HepG2 (cell line): ENCODE measurements at regions of chr2 and their contacts with region 1.

Region 1: GRCh38 chr2:43424262-43425207 is 171.3 kb downstream of the THADA start:
- DNase-seq: peak; percentile 94
- ATAC-seq: peak; percentile 83
- H3K4me3 ChIP-seq: no peak overlapping the region; a peak in 1 of 6 replicates
- H3K27ac ChIP-seq: peak overlapping the region; percentile 83
- H3K4me1 ChIP-seq: peaks cover 78% of the 10 kb centered on the region
- H3K27me3 ChIP-seq: no peaks in the 10 kb centered on the region
- CTCF ChIP-seq: no peak
- EP300 ChIP-seq: peak in 1 of 2 experiments; percentile 97; a peak in 2 of 4 replicates
- POLR2A ChIP-seq: no peak
- RAD21 ChIP-seq: peak; percentile 8; the same call in 1 of the 2 replicates

Region 2: DNA sequence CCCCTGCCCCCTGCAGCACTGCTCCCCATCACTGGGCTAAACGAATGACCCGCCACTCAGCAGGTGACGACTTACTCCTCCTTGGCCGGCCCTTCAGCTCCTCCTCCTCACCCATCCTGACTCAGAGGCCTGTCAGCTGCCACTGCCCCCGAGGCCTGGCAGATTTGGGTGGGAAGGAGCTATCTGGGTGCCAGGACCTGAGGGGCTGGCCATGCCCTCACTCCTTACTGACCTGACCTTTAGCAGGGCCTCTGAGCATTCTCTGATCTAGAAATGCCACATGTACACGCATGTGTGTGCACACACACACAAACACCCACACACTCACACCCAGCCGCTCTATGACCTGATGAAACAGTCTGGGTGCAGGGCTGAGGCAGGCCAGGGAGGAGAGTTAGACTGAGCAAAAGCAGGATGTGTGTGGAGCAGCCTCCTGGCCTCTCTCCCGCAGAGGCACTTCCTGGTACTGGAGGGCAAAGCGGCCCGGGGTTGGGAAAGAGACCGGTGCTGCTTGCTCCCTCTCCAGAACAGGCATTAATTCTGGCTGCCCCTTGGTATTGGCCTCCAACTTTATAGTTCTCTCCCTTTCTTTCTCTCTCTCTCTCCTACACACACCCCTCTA is 266.2 kb before region 1 on chr2:
- CTCF ChIA-PET with region 1: no interaction called
- POLR2A ChIA-PET with region 1: no interaction called
- in situ Hi-C with region 1: no loop called
- intact Hi-C with region 1: no loop called
- DNase-seq: peak; percentile 74
- ATAC-seq: peak; percentile 47
- H3K4me3 ChIP-seq: peak overlapping the region; percentile 39 to 70 (median 53)
- H3K27ac ChIP-seq: peak overlapping the region; percentile 57
- H3K4me1 ChIP-seq: peaks cover 90% of the 10 kb centered on the region
- H3K27me3 ChIP-seq: no peaks in the 10 kb centered on the region
- CTCF ChIP-seq: no peak
- EP300 ChIP-seq: no peak; a peak in 1 of 4 replicates
- POLR2A ChIP-seq: peak in 1 of 2 experiments; percentile 63; a peak in 3 of 4 replicates
- RAD21 ChIP-seq: 0 out of 2 replicates have a peak, but pooled peaks have one; percentile 7

Region 3: GRCh38 chr2:43312755-43313641 is 111.5 kb before region 1 on chr2:
- CTCF ChIA-PET with region 1: no interaction called
- POLR2A ChIA-PET with region 1: no interaction called
- in situ Hi-C with region 1: no loop called
- intact Hi-C with region 1: loop called (anchors 1 kb)
- DNase-seq: no peak
- ATAC-seq: peak; percentile 27
- H3K4me3 ChIP-seq: no peak overlapping the region
- H3K27ac ChIP-seq: peak overlapping the region; percentile 2
- H3K4me1 ChIP-seq: peaks cover 64% of the 10 kb centered on the region
- H3K27me3 ChIP-seq: no peaks in the 10 kb centered on the region
- CTCF ChIP-seq: no peak
- EP300 ChIP-seq: no peak
- POLR2A ChIP-seq: no peak
- RAD21 ChIP-seq: no peak

Region 4: GRCh38 chr2:43389581-43390466 is 34.7 kb before region 1 on chr2:
- CTCF ChIA-PET with region 1: no interaction called
- POLR2A ChIA-PET with region 1: interaction called, 9 read pairs
- in situ Hi-C with region 1: no loop called
- intact Hi-C with region 1: loop called (anchors 1 kb)
- DNase-seq: peak; percentile 83
- ATAC-seq: peak; percentile 92
- H3K4me3 ChIP-seq: peak overlapping the region in 2 of 3 experiments; percentile 2 to 35; a peak in 1 of 6 replicates
- H3K27ac ChIP-seq: peak overlapping the region; percentile 68
- H3K4me1 ChIP-seq: peaks cover 52% of the 10 kb centered on the region
- H3K27me3 ChIP-seq: no peaks in the 10 kb centered on the region
- CTCF ChIP-seq: no peak
- EP300 ChIP-seq: peak in 1 of 2 experiments; percentile 95; a peak in 2 of 4 replicates
- POLR2A ChIP-seq: no peak
- RAD21 ChIP-seq: no peak

Region 5: GRCh38 chr2:43455731-43456642 is 31.5 kb after region 1 on chr2:
- CTCF ChIA-PET with region 1: no interaction called
- POLR2A ChIA-PET with region 1: interaction called, 6 read pairs
- in situ Hi-C with region 1: no loop called
- intact Hi-C with region 1: loop called (anchors 5 kb)
- DNase-seq: peak; percentile 91
- ATAC-seq: peak; percentile 95
- H3K4me3 ChIP-seq: no peak overlapping the region
- H3K27ac ChIP-seq: peak overlapping the region; percentile 62
- H3K4me1 ChIP-seq: peaks cover 99% of the 10 kb centered on the region
- H3K27me3 ChIP-seq: no peaks in the 10 kb centered on the region
- CTCF ChIP-seq: peak; percentile 71
- EP300 ChIP-seq: peak in 1 of 2 experiments; percentile 77; a peak in 2 of 4 replicates
- POLR2A ChIP-seq: no peak
- RAD21 ChIP-seq: peak; percentile 27; the same call in 1 of the 2 replicates

Region 6: GRCh38 chr2:44201648-44202165 is 777.2 kb after region 1 on chr2:
- CTCF ChIA-PET with region 1: no interaction called
- POLR2A ChIA-PET with region 1: no interaction called
- in situ Hi-C with region 1: no loop called
- intact Hi-C with region 1: no loop called
- DNase-seq: no peak
- ATAC-seq: no peak
- H3K4me3 ChIP-seq: no peak overlapping the region
- H3K27ac ChIP-seq: no peak overlapping the region
- H3K4me1 ChIP-seq: no peaks in the 10 kb centered on the region
- H3K27me3 ChIP-seq: no peaks in the 10 kb centered on the region
- CTCF ChIP-seq: no peak
- EP300 ChIP-seq: no peak
- POLR2A ChIP-seq: no peak
- RAD21 ChIP-seq: no peak